AG04450 (cell line): ENCODE measurements at regions of chr12 and their contacts with region 1.

Region 1: DNA sequence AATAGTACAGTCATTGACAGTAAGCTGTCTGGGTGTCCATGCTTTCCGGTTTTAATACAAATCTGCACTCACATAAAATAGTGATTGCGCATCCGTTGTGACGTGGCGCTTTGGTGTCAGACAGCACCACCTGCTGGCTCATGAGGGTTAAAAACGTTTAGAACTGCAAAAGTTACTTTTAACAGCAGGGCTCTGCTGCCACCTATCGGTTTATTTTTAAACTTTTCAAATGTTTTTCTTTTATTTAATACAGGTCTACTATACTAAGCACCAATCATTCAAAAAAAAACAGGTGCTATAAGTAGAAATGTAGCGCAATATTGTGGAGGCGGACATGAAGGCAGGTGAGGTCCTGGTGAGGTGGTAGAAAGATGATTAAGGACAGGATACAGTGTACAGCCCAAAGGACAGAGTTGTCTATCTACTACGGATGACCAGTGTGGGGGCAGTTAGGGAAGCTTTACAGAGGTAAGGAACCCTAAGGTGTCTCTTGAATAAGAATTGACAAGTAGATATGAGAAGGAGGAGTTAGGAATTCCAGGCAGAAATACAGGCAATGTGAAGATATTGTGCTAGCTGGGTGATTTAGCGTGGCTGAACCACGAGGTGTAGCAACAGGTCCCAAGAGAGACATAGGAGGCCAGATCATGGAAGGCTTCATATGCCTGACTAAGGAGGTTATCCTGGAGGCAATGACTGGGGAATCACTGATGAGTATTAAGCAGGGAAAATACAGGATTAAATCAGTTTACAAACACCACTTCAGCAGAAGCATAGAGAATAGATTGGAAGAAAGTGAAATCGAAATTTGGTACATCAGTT is 91.5 kb upstream of the PRB2 start:
- DNase-seq: peak; percentile 62
- H3K4me3 ChIP-seq: no peak overlapping the region
- H3K27ac ChIP-seq: no peak overlapping the region
- H3K27me3 ChIP-seq: peaks cover 5% of the 10 kb centered on the region
- CTCF ChIP-seq: peak; percentile 98

Region 2: GRCh38 chr12:10771132-10771733 is 715.6 kb before region 1 on chr12:
- CTCF ChIA-PET with region 1: interaction called, 114 read pairs
- POLR2A ChIA-PET with region 1: no interaction called
- DNase-seq: peak; percentile 18
- H3K4me3 ChIP-seq: no peak overlapping the region
- H3K27ac ChIP-seq: no peak overlapping the region
- H3K27me3 ChIP-seq: peaks cover 6% of the 10 kb centered on the region
- CTCF ChIP-seq: peak; percentile 65

Region 3: DNA sequence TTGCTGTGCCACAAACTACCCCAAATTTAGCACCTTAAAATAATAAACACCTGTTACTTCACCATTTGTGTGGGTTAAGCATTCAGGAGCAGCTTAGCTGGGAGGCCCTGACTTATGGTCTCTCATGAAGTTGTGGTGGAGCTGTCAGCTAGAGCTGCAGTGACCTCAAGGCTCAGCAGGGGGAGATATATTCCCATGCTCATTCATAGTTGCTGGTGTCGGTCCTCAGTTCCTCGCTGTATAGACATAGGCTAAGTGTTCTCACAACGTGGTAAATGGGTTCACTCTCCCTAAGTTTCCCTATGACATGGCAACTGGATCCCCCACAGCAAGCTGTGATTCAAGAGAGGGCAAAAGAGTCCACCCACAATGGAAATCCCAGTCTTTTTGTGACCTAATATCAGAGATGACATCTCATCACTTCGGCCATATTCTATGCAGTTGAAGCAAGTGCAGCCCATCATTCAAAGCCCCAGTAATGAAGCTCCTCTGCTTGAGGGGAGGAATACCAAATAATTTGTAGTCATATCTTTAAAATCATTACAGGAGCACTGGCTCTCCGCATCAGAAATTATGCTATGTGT is 258.4 kb before region 1 on chr12:
- CTCF ChIA-PET with region 1: interaction called, 18 read pairs
- POLR2A ChIA-PET with region 1: interaction called, 4 read pairs
- DNase-seq: no peak
- H3K4me3 ChIP-seq: no peak overlapping the region
- H3K27ac ChIP-seq: no peak overlapping the region
- H3K27me3 ChIP-seq: no peaks in the 10 kb centered on the region
- CTCF ChIP-seq: peak; percentile 72

Region 4: GRCh38 chr12:11513288-11513687 is 26.5 kb after region 1 on chr12:
- CTCF ChIA-PET with region 1: no interaction called
- POLR2A ChIA-PET with region 1: no interaction called
- DNase-seq: no peak
- H3K4me3 ChIP-seq: no peak overlapping the region
- H3K27ac ChIP-seq: no peak overlapping the region
- H3K27me3 ChIP-seq: no peaks in the 10 kb centered on the region
- CTCF ChIP-seq: peak; percentile 30; the same call in 1 of the 2 replicates